Activated naive CD4-positive, alpha-beta T cell treated with anti-CD3 and anti-CD28 coated beads for 36 hours (primary cell): ENCODE measurements at regions of chr16 and their contacts with region 1.

Region 1: GRCh38 chr16:61332461-61332860 is 703.8 kb downstream of the CDH8 start:
- DNase-seq: no peak
- H3K4me3 Mint-ChIP-seq: no peak overlapping the region
- H3K27ac Mint-ChIP-seq: no peak overlapping the region
- H3K4me1 Mint-ChIP-seq: no peaks in the 10 kb centered on the region
- H3K27me3 Mint-ChIP-seq: no peaks in the 10 kb centered on the region

Region 2: GRCh38 chr16:61289141-61289540 is 43.3 kb before region 1 on chr16:
- CTCF ChIA-PET with region 1: no interaction called
- intact Hi-C with region 1: no loop called
- DNase-seq: no peak
- H3K4me3 Mint-ChIP-seq: no peak overlapping the region
- H3K27ac Mint-ChIP-seq: no peak overlapping the region
- H3K4me1 Mint-ChIP-seq: no peaks in the 10 kb centered on the region
- H3K27me3 Mint-ChIP-seq: no peaks in the 10 kb centered on the region

Region 3: DNA sequence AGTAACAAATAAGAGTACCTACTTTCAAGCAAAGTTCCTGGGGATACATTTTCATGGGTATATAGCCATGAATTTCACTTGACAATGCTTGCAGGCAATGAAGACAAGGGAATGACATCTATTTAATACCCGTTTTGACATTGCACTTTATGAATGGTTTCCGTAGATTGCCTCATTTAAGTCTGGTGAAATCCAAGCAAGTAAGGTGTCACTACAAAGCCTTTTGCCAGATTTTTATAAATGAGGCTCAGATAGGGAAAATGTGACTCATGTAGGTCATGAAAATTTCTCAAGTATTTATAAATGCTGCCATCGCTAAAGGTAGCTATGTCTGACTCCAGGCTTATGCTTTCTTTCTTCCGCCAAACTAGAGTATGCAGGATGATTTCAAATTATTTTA is 59.4 kb after region 1 on chr16:
- CTCF ChIA-PET with region 1: no interaction called
- intact Hi-C with region 1: loop called (anchors 10 kb)
- DNase-seq: no peak
- H3K4me3 Mint-ChIP-seq: no peak overlapping the region
- H3K27ac Mint-ChIP-seq: no peak overlapping the region
- H3K4me1 Mint-ChIP-seq: no peaks in the 10 kb centered on the region
- H3K27me3 Mint-ChIP-seq: no peaks in the 10 kb centered on the region

Region 4: GRCh38 chr16:61409604-61410003 is 77.1 kb after region 1 on chr16:
- CTCF ChIA-PET with region 1: no interaction called
- intact Hi-C with region 1: no loop called
- DNase-seq: no peak
- H3K4me3 Mint-ChIP-seq: no peak overlapping the region
- H3K27ac Mint-ChIP-seq: no peak overlapping the region
- H3K4me1 Mint-ChIP-seq: no peaks in the 10 kb centered on the region
- H3K27me3 Mint-ChIP-seq: no peaks in the 10 kb centered on the region